ENCODE measurements at regions of chr16 and their contacts with region 1.

Region 1: DNA sequence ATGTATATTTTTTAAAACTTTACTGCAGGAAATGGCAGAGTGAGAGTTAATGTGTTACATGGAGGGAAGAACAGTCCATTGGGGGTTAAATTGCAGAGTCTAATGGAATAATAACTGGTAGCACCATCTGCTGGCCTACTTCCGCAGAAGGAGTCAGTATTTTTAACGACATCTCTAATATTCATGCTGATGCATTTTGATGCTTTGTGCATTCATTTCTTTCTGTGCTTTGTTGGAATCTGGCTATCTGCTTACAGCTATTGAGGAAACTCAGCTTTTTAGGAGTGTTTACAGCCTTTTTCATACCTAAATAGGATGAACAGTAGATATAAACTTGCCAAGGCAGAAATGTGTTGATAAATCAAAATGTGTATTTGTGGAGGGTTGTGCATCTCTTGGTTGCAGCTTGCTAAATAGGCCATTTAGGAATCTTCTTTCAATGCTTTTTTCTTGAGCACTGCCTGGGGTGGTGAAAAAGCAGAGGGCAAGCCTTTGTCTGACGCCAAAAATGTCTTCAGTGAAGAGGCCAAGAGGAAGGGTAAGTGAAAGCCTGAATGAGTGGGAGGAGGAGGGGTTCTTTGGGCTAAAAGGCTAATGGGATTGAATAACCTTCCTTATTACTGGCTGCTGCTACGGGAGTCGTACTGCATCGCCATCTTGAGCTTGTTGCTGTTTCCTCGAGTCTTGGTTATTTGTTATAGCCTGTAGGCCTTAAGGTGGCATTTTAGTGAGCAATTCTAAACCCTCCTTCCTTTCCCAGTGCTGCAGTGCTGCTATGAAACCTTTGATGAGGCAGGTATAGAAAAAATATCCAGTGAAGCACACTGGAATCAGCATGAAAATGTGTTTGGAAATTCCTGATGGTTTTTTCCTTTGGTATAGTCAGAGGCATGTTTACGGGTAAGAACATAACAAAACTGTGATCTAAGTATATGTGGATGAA is 153.3 kb downstream of the CHD9 start:
- DNase-seq: peak; percentile 64
- H3K4me3 Mint-ChIP-seq: peak overlapping the region; percentile 69
- H3K27ac Mint-ChIP-seq: peak overlapping the region; percentile 97
- H3K4me1 Mint-ChIP-seq: peaks cover 20% of the 10 kb centered on the region
- H3K27me3 Mint-ChIP-seq: no peaks in the 10 kb centered on the region
- CTCF ChIP-seq: no peak

Region 2: GRCh38 chr16:53130159-53131049 is 77.7 kb before region 1 on chr16:
- CTCF ChIA-PET with region 1: interaction called, 4 read pairs
- intact Hi-C with region 1: loop called (anchors 1 kb)
- DNase-seq: peak; percentile 98
- H3K4me3 Mint-ChIP-seq: peak overlapping the region; percentile 100
- H3K27ac Mint-ChIP-seq: peak overlapping the region; percentile 85
- H3K4me1 Mint-ChIP-seq: peaks cover 32% of the 10 kb centered on the region
- H3K27me3 Mint-ChIP-seq: no peaks in the 10 kb centered on the region
- CTCF ChIP-seq: peak; percentile 34

Region 3: GRCh38 chr16:53235851-53236250 is 27.8 kb after region 1 on chr16:
- CTCF ChIA-PET with region 1: interaction called, 14 read pairs
- intact Hi-C with region 1: no loop called
- DNase-seq: no peak
- H3K4me3 Mint-ChIP-seq: no peak overlapping the region
- H3K27ac Mint-ChIP-seq: no peak overlapping the region
- H3K4me1 Mint-ChIP-seq: peaks cover 7% of the 10 kb centered on the region
- H3K27me3 Mint-ChIP-seq: no peaks in the 10 kb centered on the region
- CTCF ChIP-seq: no peak

Region 4: DNA sequence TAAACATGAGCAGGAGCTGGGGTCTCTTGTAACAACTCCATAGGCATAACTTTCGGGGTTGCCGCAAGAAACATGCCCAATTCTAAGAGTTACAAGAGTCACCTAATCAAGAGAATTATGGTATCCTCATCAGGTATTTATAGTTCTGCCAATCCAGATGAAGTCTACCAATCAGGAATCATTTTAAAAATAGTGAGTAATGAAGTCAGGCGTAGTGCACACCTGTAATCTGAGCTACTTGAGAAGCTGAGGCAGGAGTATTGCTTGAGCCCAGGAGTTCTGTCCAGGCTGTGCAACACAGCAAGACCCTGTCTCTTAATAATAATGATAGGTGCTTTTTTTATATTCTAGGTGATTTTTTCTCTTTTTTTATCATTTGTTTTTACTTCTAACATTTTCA is 97.7 kb after region 1 on chr16:
- CTCF ChIA-PET with region 1: no interaction called
- intact Hi-C with region 1: no loop called
- DNase-seq: no peak
- H3K4me3 Mint-ChIP-seq: no peak overlapping the region
- H3K27ac Mint-ChIP-seq: no peak overlapping the region
- H3K4me1 Mint-ChIP-seq: no peaks in the 10 kb centered on the region
- H3K27me3 Mint-ChIP-seq: no peaks in the 10 kb centered on the region
- CTCF ChIP-seq: no peak

Region 5: DNA sequence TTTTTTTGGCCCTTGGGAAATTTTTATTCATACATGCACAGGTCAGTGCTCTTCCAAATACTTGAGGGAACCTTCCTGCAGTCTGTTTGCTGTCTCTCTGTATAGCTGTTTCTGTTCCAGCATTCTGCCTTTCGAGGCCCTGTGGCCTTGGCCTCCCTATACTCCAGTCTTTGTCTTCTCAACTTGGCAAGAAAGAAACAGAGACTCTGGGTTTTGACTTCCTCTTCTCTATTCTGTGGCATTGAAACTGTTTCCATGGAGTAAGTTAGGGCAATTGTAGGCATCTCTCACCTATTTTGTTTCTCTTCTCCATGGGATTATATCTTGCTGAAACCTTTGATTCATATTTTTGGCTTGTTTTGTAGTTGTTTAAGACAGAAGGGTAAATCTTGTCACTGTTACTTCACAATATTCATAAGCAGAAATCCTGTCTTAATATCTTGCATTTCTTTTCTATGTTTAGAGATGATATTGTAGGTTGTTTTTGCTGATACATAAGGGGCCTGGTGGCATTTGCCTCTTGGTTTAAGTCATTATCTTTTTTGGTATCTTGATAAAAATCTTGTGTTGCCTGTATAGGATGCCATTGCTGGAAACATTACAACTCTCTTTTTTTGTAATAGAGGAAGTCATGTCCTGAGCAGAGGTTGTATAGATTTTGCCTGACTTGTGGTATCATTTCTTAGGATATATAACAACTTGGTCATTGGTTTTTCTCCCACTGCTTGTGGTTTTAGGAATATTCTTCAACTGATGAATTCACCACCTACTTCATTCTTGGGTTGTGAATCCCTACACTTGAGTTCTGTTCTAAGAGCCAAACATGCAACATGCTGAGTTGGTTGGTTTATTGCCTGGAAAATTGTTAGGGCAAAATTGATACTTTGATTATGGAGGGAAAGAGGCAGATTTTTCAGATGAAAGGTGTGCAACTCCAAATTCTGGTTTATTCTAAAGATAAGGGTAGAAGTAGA is 664.5 kb after region 1 on chr16:
- CTCF ChIA-PET with region 1: no interaction called
- intact Hi-C with region 1: no loop called
- DNase-seq: no peak
- H3K4me3 Mint-ChIP-seq: no peak overlapping the region
- H3K27ac Mint-ChIP-seq: no peak overlapping the region
- H3K4me1 Mint-ChIP-seq: no peaks in the 10 kb centered on the region
- H3K27me3 Mint-ChIP-seq: no peaks in the 10 kb centered on the region
- CTCF ChIP-seq: no peak

Measured in Calu3 (cell line).